ENCODE measurements at regions of chr21 and their contacts with region 1.

Region 1: GRCh38 chr21:28516991-28517592 is 475.6 kb downstream of the LTN1 start:
- DNase-seq: peak; percentile 39 to 76
- ATAC-seq: peak; percentile 78 to 80 (median 79)
- H3K4me3 ChIP-seq: no peak overlapping the region
- H3K4me3 Mint-ChIP-seq: no peak overlapping the region
- H3K27ac ChIP-seq: no peak overlapping the region
- H3K27ac Mint-ChIP-seq: no peak overlapping the region
- H3K4me1 ChIP-seq: peaks cover 5% of the 10 kb centered on the region
- H3K4me1 Mint-ChIP-seq: peaks cover 13 to 24% of the 10 kb centered on the region in 2 donors
- H3K27me3 ChIP-seq: no peaks in the 10 kb centered on the region
- H3K27me3 Mint-ChIP-seq: no peaks in the 10 kb centered on the region
- CTCF ChIP-seq: peak; percentile 62

Region 2: DNA sequence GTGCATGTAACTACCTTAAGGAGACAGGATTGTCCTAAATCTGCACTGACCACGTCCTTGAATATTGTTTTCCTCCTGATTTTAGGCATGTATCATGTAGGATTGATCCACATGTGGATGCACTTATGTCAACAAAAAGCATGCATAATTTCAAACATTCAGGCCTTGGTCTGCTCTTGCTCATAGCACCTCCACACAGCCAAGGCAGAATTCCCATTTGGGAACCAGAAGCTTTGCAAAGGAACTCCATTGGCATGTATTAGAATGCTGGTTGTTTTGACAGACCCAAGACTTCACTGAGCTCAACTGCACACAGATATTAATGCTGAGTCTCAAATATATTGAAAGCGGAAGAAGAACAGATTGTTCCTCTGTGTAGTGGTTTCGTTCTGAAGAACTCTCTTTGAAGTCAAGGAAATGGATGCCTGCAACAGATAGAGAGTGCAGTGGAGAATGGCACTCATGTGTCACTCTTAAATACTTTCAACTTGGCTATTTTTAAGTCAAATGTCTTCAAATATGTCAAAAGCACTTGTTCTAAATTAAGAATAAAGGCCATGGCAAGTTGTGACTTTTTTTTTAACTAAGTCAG is 88.0 kb after region 1 on chr21:
- intact Hi-C with region 1: no loop called
- DNase-seq: peak in 1 of 2 donors; percentile 62
- ATAC-seq: peak; percentile 24 to 70 (median 56)
- H3K4me3 ChIP-seq: no peak overlapping the region
- H3K4me3 Mint-ChIP-seq: no peak overlapping the region
- H3K27ac ChIP-seq: no peak overlapping the region
- H3K27ac Mint-ChIP-seq: peak overlapping the region in 1 of 2 donors; percentile 34
- H3K4me1 ChIP-seq: no peaks in the 10 kb centered on the region
- H3K4me1 Mint-ChIP-seq: peaks cover 27 to 43% of the 10 kb centered on the region in 2 donors
- H3K27me3 ChIP-seq: no peaks in the 10 kb centered on the region
- H3K27me3 Mint-ChIP-seq: no peaks in the 10 kb centered on the region
- CTCF ChIP-seq: no peak

Region 3: DNA sequence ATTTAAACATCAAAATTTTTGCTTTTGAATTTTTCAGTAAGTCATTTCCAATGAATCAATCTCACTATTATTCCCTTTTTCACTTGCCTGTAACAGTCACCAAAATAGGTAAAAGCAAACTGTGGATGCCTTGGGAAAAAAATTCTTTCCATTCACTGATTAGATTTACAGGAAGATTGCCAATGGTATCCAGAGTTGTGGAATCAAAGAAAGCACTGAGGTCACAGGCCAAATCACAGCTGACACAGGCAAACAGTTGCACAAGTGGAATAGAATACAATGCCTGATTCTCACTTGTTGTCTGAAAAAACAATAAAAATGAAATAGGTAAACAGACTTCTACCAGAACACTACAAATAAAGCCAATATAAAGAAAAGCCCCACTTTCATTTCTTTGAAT is 427.2 kb after region 1 on chr21:
- intact Hi-C with region 1: loop called (anchors 2 kb)
- DNase-seq: no peak
- ATAC-seq: no peak
- H3K4me3 ChIP-seq: no peak overlapping the region
- H3K4me3 Mint-ChIP-seq: no peak overlapping the region
- H3K27ac ChIP-seq: no peak overlapping the region
- H3K27ac Mint-ChIP-seq: peak overlapping the region in 1 of 2 donors; percentile 14
- H3K4me1 ChIP-seq: no peaks in the 10 kb centered on the region
- H3K4me1 Mint-ChIP-seq: no peaks in the 10 kb centered on the region
- H3K27me3 ChIP-seq: no peaks in the 10 kb centered on the region
- H3K27me3 Mint-ChIP-seq: no peaks in the 10 kb centered on the region
- CTCF ChIP-seq: no peak

Measured in natural killer cell (primary cell).